Naive thymus-derived CD8-positive, alpha-beta T cell (primary cell): ENCODE measurements at regions of chr6 and their contacts with region 1.

Region 1: DNA sequence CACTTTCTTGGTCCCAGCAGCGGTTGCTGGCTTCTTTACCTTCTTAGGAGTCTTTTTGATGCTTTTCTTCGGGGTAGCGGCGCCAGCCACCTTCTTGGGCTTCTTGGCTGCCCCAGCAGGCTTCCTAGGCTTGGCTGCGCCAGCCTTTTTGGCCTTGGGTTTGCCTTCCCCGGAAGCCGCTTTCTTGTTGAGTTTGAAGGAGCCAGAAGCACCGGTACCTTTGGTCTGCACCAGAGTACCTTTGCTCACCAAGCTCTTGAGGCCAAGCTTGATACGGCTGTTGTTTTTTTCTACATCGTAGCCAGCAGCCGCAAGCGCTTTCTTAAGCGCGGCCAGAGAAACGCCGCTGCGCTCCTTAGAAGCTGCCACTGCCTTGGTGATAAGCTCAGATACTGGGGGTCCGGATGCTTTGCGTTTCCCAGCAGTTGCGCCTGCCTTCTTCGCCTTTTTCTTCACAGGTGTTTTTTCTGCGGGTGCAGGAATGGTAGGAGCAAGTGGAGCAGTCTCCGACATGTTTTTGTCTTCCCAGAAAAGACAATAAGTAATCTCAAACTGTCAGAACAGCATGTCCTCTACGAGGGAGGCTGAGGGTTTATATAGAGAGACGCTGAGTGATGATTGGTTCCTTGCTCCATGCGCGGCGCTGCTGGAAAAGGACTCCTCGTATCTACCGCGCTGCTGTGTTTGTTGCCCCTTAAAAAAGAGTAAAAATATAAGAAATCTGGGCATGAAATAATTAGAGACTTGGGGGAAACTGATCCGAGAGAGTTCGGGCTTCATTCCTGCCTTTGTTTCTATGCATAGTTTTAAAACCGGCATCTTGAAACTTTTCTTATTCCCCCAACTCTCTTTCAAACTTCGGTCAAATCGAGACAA is 130.3 kb upstream of the BTN3A2 start:
- DNase-seq: peak; percentile 41 to 91 (median 86)
- ATAC-seq: peak; percentile 69
- H3K4me3 Mint-ChIP-seq: peak overlapping the region; percentile 91 to 99 (median 95)
- H3K27ac Mint-ChIP-seq: peak overlapping the region; percentile 95 to 100 (median 97)
- H3K4me1 Mint-ChIP-seq: peaks cover 12 to 37% (median 32%) of the 10 kb centered on the region in 4 donors
- H3K27me3 Mint-ChIP-seq: no peaks in the 10 kb centered on the region

Region 2: GRCh38 chr6:26031595-26032339 is 202.9 kb before region 1 on chr6:
- POLR2A ChIA-PET with region 1: interaction called, 24 read pairs
- DNase-seq: peak; percentile 71 to 96 (median 91)
- ATAC-seq: peak; percentile 67 to 71
- H3K4me3 Mint-ChIP-seq: peak overlapping the region; percentile 94 to 97 (median 95)
- H3K27ac Mint-ChIP-seq: peak overlapping the region; percentile 93 to 99 (median 96)
- H3K4me1 Mint-ChIP-seq: peaks cover 11 to 52% (median 41%) of the 10 kb centered on the region in 4 donors
- H3K27me3 Mint-ChIP-seq: peaks cover 0 to 2% (median 0%) of the 10 kb centered on the region in 5 donors

Region 3: DNA sequence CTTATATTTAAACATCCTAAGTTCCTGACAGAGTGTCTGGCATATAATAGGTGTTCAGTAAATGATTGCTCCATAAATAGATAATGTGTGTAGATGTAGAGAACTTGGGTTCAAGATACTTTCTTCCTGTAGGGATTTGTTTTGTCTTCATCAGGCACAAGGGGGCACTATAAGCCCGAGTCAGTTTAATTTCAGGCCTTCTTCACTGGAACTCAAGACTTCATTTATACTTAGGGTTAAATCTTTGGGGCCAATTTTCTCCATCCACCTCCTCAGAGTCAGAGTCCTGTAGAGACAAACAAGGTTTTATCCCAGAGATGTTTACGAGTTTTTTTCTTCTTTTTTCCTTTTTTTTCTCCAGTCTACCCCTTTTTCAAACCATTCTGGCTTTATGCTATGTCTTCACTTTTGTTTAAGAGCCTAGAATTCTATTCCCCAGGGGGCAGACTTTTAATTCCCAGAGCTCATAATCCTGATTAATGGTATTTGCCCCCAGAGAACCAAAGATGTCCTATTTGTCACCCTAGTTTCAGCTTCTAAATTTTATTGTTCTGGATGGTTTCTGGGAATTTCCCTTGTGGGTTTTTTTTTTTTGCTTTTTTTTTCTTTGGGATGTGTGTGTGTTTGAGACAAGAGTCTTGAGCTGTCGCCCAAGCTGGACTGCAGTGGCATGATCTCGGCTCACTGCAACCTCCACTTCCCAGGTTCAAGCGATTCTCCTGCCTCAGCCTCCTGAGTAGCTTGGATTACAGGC is 59.1 kb before region 1 on chr6:
- POLR2A ChIA-PET with region 1: interaction called, 35 read pairs
- DNase-seq: peak in 9 of 10 donors; percentile 21 to 76 (median 59)
- ATAC-seq: no peak
- H3K4me3 Mint-ChIP-seq: peak overlapping the region in 5 of 10 donors; percentile 33 to 62 (median 51)
- H3K27ac Mint-ChIP-seq: peak overlapping the region; percentile 11 to 82 (median 59)
- H3K4me1 Mint-ChIP-seq: peaks cover 15 to 43% (median 34%) of the 10 kb centered on the region in 4 donors
- H3K27me3 Mint-ChIP-seq: no peaks in the 10 kb centered on the region

Region 4: DNA sequence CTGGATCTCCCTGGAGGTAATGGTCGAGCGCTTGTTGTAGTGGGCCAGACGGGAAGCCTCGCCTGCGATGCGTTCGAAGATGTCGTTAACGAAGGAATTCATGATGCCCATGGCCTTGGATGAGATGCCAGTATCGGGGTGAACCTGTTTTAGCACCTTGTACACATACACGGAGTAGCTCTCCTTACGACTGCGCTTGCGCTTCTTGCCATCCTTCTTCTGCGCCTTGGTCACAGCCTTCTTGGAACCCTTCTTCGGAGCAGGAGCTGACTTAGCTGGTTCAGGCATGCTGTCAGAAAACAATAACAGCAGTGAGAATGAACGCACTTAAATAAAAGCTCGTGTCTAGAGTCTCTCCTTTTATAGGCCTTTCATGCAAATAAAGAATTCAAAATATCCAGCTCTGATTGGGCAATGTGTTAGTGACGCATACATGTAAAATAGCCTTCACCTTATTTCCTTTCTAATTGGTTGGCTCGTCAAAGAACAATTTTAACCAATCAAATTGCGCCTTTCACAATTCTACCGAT is 18.2 kb before region 1 on chr6:
- POLR2A ChIA-PET with region 1: interaction called, 669 read pairs
- DNase-seq: peak; percentile 34 to 95 (median 86)
- ATAC-seq: peak; percentile 81 to 84
- H3K4me3 Mint-ChIP-seq: no peak overlapping the region
- H3K27ac Mint-ChIP-seq: no peak overlapping the region
- H3K4me1 Mint-ChIP-seq: peaks cover 0 to 12% (median 7%) of the 10 kb centered on the region in 4 donors
- H3K27me3 Mint-ChIP-seq: no peaks in the 10 kb centered on the region

Region 5: GRCh38 chr6:27132532-27133280 is 898.0 kb after region 1 on chr6:
- POLR2A ChIA-PET with region 1: interaction called, 15 read pairs
- DNase-seq: peak; percentile 69 to 98 (median 94)
- ATAC-seq: peak; percentile 84
- H3K4me3 Mint-ChIP-seq: no peak overlapping the region
- H3K27ac Mint-ChIP-seq: no peak overlapping the region
- H3K4me1 Mint-ChIP-seq: peaks cover 5 to 20% (median 10%) of the 10 kb centered on the region in 4 donors
- H3K27me3 Mint-ChIP-seq: no peaks in the 10 kb centered on the region

Region 6: DNA sequence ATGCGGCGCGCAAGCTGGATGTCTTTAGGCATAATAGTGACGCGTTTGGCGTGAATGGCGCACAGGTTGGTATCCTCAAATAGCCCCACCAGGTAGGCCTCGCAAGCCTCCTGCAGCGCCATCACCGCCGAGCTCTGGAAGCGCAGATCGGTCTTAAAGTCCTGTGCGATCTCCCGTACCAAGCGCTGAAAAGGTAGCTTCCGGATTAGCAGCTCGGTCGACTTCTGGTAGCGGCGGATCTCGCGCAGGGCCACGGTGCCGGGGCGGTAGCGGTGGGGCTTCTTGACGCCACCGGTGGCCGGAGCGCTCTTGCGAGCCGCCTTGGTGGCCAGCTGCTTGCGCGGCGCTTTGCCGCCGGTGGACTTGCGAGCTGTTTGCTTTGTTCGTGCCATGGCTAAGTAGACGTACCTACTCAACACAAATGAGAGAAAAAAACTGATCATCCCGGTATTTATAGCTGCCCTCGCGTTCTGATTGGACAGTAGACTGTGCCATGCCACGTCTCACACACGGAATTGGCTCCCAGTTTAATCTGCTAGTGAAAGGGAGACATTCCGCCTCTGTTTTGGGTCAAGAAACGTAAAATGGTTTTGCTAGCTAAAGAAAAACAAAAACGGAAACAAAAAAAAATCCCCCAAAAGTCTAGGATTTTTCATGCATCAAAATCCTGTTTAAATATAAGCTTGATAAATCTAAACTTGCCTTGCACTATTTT is 1637.4 kb after region 1 on chr6:
- POLR2A ChIA-PET with region 1: interaction called, 11 read pairs
- DNase-seq: peak; percentile 57 to 99 (median 91)
- ATAC-seq: peak; percentile 78 to 79
- H3K4me3 Mint-ChIP-seq: peak overlapping the region; percentile 86 to 95 (median 92)
- H3K27ac Mint-ChIP-seq: peak overlapping the region; percentile 89 to 99 (median 96)
- H3K4me1 Mint-ChIP-seq: peaks cover 21 to 46% (median 38%) of the 10 kb centered on the region in 4 donors
- H3K27me3 Mint-ChIP-seq: no peaks in the 10 kb centered on the region